ENCODE measurements at regions of chr4 and their contacts with region 1.

Region 1: GRCh38 chr4:4559596-4559995 is 17.7 kb upstream of the STX18 start:
- DNase-seq: no peak
- ATAC-seq: no peak
- H3K4me3 ChIP-seq: no peak overlapping the region
- H3K4me3 Mint-ChIP-seq: no peak overlapping the region
- H3K27ac ChIP-seq: no peak overlapping the region
- H3K27ac Mint-ChIP-seq: no peak overlapping the region
- H3K4me1 ChIP-seq: no peaks in the 10 kb centered on the region
- H3K4me1 Mint-ChIP-seq: no peaks in the 10 kb centered on the region
- H3K27me3 ChIP-seq: no peaks in the 10 kb centered on the region
- H3K27me3 Mint-ChIP-seq: no peaks in the 10 kb centered on the region

Region 2: DNA sequence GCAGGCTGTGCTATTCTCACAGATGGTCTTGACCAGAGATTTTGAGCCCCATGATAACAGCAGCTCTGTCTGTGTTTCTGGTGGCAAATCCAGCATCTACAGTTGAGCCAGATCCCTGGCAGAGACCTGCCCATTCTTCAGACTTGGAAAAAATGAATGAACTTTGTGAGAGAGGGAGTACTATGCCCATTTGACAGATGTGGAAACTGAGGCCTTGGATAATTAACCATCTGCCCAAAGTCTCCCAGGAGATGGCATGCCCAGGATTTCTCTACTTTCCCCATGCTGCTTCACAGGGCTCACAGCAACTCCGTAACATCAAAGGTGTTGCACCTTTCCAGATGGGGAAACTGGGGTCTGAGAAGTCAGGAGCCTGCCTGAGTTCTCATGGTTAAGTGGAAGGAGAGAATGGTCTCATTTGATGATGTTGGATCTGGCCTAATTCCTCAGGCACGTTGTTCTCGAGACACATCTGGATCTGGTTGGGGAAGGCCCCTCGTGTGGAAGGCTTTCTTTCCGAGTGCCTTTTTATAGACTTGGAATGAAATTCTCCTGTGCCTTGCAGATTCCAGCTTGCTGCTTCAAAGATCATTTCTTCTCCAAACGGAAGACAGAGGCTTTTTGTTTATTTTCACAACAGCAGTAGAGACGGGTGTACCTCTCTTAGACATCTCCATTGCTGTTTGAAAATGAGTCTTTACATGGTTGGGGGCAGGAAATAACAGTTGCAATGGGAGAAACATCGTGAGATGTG is 55.5 kb after region 1 on chr4:
- CTCF ChIA-PET with region 1: no interaction called
- POLR2A ChIA-PET with region 1: no interaction called
- DNase-seq: no peak
- ATAC-seq: no peak
- H3K4me3 ChIP-seq: no peak overlapping the region
- H3K4me3 Mint-ChIP-seq: no peak overlapping the region
- H3K27ac ChIP-seq: no peak overlapping the region
- H3K27ac Mint-ChIP-seq: no peak overlapping the region
- H3K4me1 ChIP-seq: no peaks in the 10 kb centered on the region
- H3K4me1 Mint-ChIP-seq: no peaks in the 10 kb centered on the region
- H3K27me3 ChIP-seq: no peaks in the 10 kb centered on the region
- H3K27me3 Mint-ChIP-seq: no peaks in the 10 kb centered on the region

Region 3: GRCh38 chr4:4659871-4660651 is 100.5 kb after region 1 on chr4:
- CTCF ChIA-PET with region 1: no interaction called
- POLR2A ChIA-PET with region 1: interaction called in 1 of 2 experiments, 12 read pairs
- DNase-seq: no peak
- ATAC-seq: no peak
- H3K4me3 ChIP-seq: no peak overlapping the region
- H3K4me3 Mint-ChIP-seq: no peak overlapping the region
- H3K27ac ChIP-seq: no peak overlapping the region
- H3K27ac Mint-ChIP-seq: no peak overlapping the region
- H3K4me1 ChIP-seq: no peaks in the 10 kb centered on the region
- H3K4me1 Mint-ChIP-seq: no peaks in the 10 kb centered on the region
- H3K27me3 ChIP-seq: no peaks in the 10 kb centered on the region
- H3K27me3 Mint-ChIP-seq: no peaks in the 10 kb centered on the region

Measured in T-cell (primary cell).